BJ (cell line): ENCODE measurements at regions of chr1 and their contacts with region 1.

Region 1: GRCh38 chr1:100051401-100051800 is 81.3 kb downstream of the SASS6 start:
- DNase-seq: no peak
- H3K4me3 ChIP-seq: no peak overlapping the region
- H3K27me3 ChIP-seq: no peaks in the 10 kb centered on the region
- CTCF ChIP-seq: no peak

Region 2: DNA sequence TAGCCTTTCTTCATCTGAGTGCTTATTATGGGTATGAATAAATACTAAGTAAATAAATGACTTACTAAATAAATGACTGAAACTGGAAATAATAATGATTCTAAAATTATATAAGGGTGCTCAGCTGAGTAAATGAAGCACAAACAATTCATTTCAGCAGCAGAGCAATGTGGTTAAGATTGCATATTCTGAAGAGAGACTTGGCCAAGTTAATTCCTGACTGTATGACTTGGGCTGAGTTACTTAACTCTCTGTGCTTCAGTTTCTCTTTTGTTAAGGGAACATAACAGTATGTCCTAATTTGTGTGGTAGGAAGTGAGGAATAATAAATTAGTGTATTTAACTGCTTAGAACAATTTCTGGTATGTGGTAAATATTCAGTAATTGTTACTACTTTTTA is 182.1 kb before region 1 on chr1:
- CTCF ChIA-PET with region 1: no interaction called
- POLR2A ChIA-PET with region 1: no interaction called
- DNase-seq: no peak
- H3K4me3 ChIP-seq: no peak overlapping the region
- H3K27me3 ChIP-seq: no peaks in the 10 kb centered on the region
- CTCF ChIP-seq: no peak

Region 3: GRCh38 chr1:100019220-100019619 is 32.2 kb before region 1 on chr1:
- CTCF ChIA-PET with region 1: no interaction called
- POLR2A ChIA-PET with region 1: interaction called, 11 read pairs
- DNase-seq: no peak
- H3K4me3 ChIP-seq: no peak overlapping the region
- H3K27me3 ChIP-seq: no peaks in the 10 kb centered on the region
- CTCF ChIP-seq: no peak